ENCODE measurements at regions of chr9 and their contacts with region 1.

Region 1: DNA sequence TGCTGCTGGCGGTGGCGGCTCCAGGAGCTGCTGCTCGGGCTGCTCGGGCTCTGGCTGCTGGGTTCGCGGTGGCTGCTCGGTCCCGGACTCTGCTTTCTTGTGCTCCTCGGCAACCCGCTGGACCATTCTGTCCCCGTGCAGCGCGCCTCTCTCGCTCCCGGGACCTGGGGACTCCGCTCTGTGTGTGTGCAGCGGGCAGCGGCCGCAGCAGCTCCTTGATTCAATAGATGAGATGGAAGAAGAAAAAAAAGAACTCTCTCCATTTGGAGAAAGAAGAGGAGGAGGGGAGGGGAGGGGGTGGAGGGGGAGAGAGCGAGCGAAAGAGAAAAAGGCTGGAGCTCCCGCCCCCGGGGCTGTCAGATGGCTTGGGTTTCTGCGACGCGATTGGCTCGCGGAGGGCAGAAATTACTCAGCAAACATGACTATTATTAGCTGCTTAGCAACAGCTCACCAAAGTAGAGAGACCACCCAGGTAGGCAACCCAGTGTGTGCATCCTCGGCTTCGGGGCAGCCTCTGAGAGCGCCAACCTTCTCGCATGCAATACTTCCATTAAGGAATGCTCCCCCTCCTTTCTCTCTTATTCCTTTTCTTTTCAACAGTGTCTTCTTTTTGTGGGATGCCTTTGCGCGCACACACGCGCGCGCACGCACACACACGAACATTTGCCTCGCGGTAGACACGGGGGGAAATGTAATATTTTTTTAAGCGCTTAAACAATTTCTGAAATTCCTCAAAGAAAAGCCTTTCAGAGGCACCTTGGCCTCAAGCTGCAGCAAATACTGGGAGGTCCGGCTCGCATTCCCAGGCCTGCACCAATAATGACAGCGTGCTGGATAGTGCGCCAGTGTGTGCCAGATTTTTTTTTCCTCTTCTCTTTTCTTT is 7.6 kb downstream of the PTCH1 start:
- DNase-seq: peak; percentile 96 to 98
- H3K4me3 ChIP-seq: peak overlapping the region; percentile 71
- H3K4me1 ChIP-seq: peaks cover 34% of the 10 kb centered on the region
- H3K27me3 ChIP-seq: no peaks in the 10 kb centered on the region

Region 2: DNA sequence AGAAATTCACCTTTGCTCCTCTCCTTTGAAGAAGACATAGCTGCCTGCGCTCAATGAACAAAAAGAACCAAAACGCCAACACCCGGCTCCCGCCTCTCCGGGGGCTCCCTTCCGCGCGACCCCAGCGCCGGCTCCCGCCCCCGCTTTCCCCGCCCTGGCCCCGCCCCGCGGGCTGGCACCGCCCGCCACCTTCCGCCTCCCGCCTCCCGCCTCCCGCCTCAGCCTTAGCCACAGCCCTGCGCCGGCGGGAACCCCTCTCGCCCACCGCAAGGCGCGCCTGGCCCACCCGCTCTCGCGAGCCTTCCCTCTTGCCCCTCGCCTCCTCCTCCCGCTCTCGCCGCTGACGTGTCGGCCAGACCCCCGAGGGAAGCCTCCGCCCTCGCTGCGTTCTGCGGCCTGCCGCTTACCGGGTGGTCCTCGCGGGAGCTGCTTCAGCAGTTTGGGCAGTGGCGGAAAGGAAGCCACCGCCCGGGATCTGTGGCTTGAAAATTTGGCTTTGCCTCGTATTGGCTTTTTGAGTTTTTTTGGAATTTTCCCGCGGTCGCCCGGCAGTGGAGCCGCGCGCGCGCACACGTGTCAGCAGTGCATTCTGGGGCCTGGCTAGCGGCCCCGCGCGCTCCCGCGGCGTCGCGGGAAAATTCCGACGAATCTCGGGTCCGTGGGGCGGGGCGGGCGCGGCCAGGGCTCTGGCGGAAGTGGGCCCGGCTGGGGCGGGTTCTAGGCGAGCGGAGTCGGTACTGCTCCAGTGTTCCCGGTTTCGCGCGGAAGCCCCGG is 191.9 kb before region 1 on chr9 and contains the start of gene FANCC:
- in situ Hi-C with region 1: no loop called
- DNase-seq: peak; percentile 90 to 97
- H3K4me3 ChIP-seq: peak within 1 kb of the TSS; percentile 87
- H3K4me1 ChIP-seq: peaks cover 26% of the 10 kb centered on the region
- H3K27me3 ChIP-seq: no peaks in the 10 kb centered on the region

Region 3: DNA sequence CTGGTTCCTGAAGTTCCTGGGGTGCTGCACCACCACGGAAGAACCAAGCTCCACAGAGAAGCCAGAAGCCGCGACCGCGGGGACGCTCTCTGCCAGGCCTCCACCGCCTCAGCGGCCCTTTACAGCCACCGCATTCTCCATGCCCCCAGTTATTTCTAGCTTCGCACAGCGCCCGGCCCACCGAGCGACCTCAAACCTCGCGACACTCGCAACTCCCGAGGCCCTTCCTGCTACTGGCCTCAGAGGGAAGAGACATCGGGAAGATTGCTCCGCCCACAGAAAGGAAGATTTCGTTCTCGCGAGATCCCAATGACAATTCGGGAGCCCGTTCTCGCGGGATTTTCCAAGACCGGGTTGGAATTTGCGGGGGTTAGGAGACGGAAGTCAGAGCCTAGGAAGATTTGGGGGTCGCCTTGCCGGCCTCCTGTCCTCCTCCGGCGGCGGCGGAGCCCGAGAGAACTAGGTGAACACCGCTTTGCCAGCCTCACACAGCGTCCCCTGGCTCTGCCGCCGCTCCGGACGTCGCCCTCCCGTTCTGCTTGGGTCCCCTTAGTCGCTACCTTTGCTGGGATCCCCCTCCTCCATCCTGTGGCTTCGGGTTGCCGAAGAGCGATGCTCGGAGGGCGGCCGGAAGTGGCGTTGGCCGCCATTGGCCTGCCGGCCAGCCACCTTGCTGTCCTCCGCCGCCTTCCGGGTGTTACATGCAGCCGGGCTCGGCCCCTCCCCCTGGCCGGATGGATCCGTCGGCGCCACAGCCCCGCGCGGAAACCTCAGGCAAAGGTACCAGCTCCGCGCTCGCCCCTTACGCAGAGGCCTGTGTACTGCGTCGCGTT is 366.3 kb after region 1 on chr9 and contains the start of gene ERCC6L2:
- in situ Hi-C with region 1: loop called (anchors 10 kb)
- DNase-seq: peak; percentile 96 to 97
- H3K4me3 ChIP-seq: no peak within 1 kb of the TSS
- H3K4me1 ChIP-seq: peaks cover 20% of the 10 kb centered on the region
- H3K27me3 ChIP-seq: no peaks in the 10 kb centered on the region

Region 4: DNA sequence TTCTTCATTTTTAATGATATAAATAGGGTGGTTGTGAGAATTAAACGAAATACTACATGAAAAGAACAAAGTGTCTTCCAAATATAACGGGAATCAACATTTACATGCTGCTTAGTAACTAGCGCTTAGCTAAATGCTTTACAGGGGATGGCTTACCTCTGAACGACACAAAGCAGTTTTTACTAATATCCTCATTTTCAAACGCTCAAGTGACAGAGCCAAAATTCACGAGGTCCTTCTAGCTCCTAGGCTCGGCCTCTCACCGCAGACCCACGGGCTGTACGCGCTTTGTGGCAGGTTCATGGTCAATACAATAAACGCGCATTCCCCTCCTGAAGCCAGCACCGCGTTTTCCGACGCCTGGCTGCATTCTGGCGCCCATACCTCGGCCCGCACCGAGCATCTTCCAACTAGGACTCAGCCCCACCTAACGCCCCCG is 1268.2 kb after region 1 on chr9:
- in situ Hi-C with region 1: no loop called
- DNase-seq: no peak
- H3K4me3 ChIP-seq: no peak overlapping the region
- H3K4me1 ChIP-seq: no peaks in the 10 kb centered on the region
- H3K27me3 ChIP-seq: no peaks in the 10 kb centered on the region

Measured in HAP-1 (cell line).